Endothelial cell of umbilical vein (primary cell): ENCODE measurements at regions of chr1 and their contacts with region 1.

Region 1: DNA sequence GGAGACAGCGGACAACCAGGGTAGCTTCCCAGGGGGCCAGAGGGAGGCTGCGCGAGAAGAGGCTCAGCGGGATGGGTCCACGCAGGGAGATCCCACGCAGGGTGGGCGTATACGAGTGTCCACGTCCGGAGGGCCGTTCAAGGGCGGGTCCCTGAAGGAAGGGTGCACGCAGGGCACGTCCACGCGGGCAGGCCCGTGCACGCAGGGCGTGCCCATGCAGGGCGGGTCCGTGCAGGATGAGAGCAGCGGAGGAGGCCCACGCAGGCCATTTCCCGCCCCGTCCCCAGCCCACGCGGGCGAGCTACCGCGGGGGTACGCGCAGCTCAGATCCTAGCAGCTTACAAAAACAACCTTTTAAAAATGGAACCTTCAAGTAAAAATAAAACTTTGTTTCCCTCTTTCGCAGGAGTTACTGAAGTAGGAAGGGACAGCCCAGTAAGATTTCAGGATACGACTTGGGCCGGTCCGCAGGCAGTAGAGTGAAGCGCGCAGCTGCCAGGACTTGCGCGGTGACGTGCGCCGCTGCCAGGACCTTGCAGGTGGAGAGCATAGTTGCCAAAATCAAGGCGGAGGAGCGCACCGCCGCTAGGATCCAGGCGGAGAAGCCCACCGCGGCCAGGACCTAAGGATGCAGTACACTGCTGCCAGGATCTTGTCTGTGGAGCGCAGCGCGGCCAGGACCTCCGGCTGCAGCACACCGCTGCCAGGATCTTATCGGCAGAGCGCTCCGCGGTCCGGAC is 416 bp upstream of the RNF187 start:
- DNase-seq: peak; percentile 94
- H3K4me3 ChIP-seq: peak overlapping the region; percentile 4 to 79 (median 46)
- H3K27ac ChIP-seq: peak overlapping the region; percentile 72
- H3K4me1 ChIP-seq: no peaks in the 10 kb centered on the region
- H3K27me3 ChIP-seq: no peaks in the 10 kb centered on the region
- CTCF ChIP-seq: no peak
- POLR2A ChIP-seq: peak; percentile 65

Region 2: DNA sequence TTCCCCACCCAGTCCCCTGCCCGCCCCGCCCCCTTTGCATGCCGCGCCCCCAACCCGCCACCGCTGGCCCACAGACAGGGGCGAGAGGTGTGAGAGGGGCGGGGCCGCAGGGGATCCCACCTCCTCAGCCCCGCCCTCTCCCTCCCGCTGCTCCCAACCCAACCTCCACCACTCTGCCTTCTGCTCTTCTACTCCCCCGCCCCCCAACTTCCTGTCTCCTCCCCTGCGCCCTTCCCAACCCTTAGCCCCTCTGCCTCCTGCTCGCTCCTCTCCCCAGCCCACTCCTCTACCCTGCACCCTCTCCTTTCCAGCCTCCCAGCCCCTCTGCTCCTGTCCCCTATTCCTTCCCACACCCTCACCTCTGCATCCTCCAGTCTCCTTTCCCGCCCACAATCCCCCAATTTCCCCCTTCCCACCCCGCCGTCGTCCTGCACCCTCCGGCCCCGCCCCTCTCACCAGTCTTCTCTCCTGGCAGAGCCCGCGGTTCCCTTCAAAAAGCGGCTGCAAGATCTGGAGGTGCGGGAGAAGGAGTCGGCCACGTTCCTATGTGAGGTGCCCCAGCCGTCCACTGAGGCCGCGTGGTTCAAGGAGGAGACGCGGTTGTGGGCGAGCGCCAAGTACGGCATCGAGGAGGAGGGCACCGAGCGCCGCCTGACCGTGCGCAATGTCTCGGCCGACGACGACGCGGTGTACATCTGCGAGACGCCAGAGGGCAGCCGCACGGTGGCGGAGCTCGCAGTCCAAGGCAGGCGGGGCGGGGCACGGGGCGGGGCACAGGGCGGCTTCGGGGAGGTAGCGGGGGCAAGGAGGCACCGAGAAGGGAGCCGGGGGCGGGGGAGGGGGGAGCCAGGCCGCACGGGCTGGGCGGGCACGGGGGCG is 273.6 kb before region 1 on chr1:
- CTCF ChIA-PET with region 1: no interaction called
- POLR2A ChIA-PET with region 1: no interaction called
- dilution Hi-C with region 1: no loop called
- intact Hi-C with region 1: no loop called
- DNase-seq: peak; percentile 63
- H3K4me3 ChIP-seq: peak overlapping the region in 1 of 3 experiments; percentile 26
- H3K27ac ChIP-seq: no peak overlapping the region
- H3K4me1 ChIP-seq: no peaks in the 10 kb centered on the region
- H3K27me3 ChIP-seq: peaks cover 4 to 16% of the 10 kb centered on the region in 2 experiments
- CTCF ChIP-seq: peak; percentile 33 to 73
- POLR2A ChIP-seq: no peak

Region 3: GRCh38 chr1:228471762-228472398 is 14.9 kb before region 1 on chr1:
- CTCF ChIA-PET with region 1: interaction called, 25 read pairs
- POLR2A ChIA-PET with region 1: no interaction called
- dilution Hi-C with region 1: no loop called
- intact Hi-C with region 1: loop called (anchors 1 kb)
- DNase-seq: peak; percentile 34
- H3K4me3 ChIP-seq: no peak overlapping the region
- H3K27ac ChIP-seq: no peak overlapping the region
- H3K4me1 ChIP-seq: peaks cover 15% of the 10 kb centered on the region
- H3K27me3 ChIP-seq: peaks cover 28 to 33% of the 10 kb centered on the region in 2 experiments
- CTCF ChIP-seq: peak; percentile 38 to 55
- POLR2A ChIP-seq: no peak